T-cell (primary cell): ENCODE measurements at regions of chrX and their contacts with region 1.

Region 1: GRCh38 chrX:54470054-54470760 is 25.8 kb downstream of the FGD1 start:
- DNase-seq: no peak
- ATAC-seq: no peak
- H3K4me3 ChIP-seq: no peak overlapping the region
- H3K4me3 Mint-ChIP-seq: no peak overlapping the region
- H3K27ac ChIP-seq: no peak overlapping the region
- H3K27ac Mint-ChIP-seq: no peak overlapping the region
- H3K4me1 ChIP-seq: no peaks in the 10 kb centered on the region
- H3K4me1 Mint-ChIP-seq: no peaks in the 10 kb centered on the region
- H3K27me3 ChIP-seq: no peaks in the 10 kb centered on the region
- H3K27me3 Mint-ChIP-seq: peaks cover 0 to 7% of the 10 kb centered on the region in 2 donors

Region 2: DNA sequence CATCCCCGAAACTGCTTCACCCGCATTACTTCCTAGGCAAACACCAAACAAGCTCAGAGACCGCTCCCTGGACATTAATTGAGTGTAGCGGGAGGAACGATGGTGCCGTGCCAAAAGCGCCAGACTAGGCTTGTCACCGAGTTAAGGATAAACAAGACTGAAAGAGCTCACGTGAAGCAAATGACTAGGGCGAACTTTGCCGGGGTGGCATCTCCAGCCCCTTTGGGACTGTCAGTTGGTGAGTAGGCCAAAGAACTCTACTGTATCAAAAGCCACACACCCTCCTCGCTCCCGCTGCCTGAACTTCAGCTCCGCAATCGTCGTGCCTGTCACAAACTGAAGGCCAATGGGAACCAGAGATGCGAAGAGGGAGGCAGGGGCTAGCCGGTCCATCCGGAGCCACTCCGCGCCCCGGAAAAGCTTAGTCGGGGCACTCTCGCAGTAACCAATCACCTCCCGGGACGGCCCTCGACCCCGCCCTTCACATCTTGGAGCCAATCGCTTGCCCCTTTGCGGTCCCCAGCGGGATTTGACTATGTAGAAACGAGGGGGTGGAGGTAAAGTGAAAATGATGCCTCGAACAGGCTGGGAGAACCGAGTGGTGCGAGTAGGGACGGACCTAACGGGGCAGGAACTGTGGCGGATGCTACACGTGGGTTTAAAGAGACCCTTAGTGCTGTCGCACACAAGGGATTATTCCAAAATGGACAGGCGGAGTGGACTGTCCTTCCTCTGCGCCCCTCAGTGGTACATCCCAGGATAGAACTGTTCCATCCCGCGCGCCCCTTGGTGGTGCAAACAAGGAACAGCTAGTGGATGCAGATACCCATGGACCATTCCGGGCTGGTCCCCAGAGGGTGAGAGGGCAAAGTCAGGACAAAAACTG is 1474.8 kb before region 1 on chrX:
- CTCF ChIA-PET with region 1: no interaction called
- POLR2A ChIA-PET with region 1: interaction called in 1 of 2 experiments, 10 read pairs
- DNase-seq: peak; percentile 75 to 94 (median 90)
- ATAC-seq: peak; percentile 96 to 97 (median 96)
- H3K4me3 ChIP-seq: peak overlapping the region; percentile 79 to 83
- H3K4me3 Mint-ChIP-seq: peak overlapping the region; percentile 89 to 92 (median 89)
- H3K27ac ChIP-seq: peak overlapping the region; percentile 95
- H3K27ac Mint-ChIP-seq: peak overlapping the region; percentile 98 to 99
- H3K4me1 ChIP-seq: peaks cover 4 to 24% of the 10 kb centered on the region in 2 experiments
- H3K4me1 Mint-ChIP-seq: peaks cover 13 to 27% (median 16%) of the 10 kb centered on the region in 3 donors
- H3K27me3 ChIP-seq: peaks cover 0 to 10% of the 10 kb centered on the region in 2 experiments
- H3K27me3 Mint-ChIP-seq: peaks cover 0 to 17% of the 10 kb centered on the region in 2 donors

Region 3: DNA sequence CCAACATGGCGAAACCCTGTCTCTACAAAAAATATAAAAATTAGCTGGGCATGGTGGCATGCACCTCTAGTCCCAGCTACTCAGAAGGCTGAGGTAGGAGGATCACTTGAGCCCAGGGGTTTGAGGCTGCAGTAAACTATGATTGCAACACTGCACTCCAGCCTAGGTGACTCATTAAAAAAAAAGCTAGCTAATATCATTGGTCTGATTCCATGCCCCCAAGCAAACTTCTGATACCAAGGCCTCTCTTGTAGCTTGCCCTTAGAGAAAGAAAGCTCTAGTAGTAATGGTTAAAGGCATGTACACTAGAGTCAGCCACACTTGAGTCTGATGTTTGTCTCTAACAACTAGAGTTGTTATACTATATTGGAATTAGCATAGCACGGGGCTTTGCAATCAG is 393.3 kb before region 1 on chrX:
- CTCF ChIA-PET with region 1: no interaction called
- POLR2A ChIA-PET with region 1: no interaction called
- DNase-seq: no peak
- ATAC-seq: no peak
- H3K4me3 ChIP-seq: no peak overlapping the region
- H3K4me3 Mint-ChIP-seq: no peak overlapping the region
- H3K27ac ChIP-seq: no peak overlapping the region
- H3K27ac Mint-ChIP-seq: no peak overlapping the region
- H3K4me1 ChIP-seq: no peaks in the 10 kb centered on the region
- H3K4me1 Mint-ChIP-seq: no peaks in the 10 kb centered on the region
- H3K27me3 ChIP-seq: no peaks in the 10 kb centered on the region
- H3K27me3 Mint-ChIP-seq: no peaks in the 10 kb centered on the region

Region 4: GRCh38 chrX:54397113-54397512 is 73.1 kb before region 1 on chrX:
- CTCF ChIA-PET with region 1: no interaction called
- POLR2A ChIA-PET with region 1: no interaction called
- DNase-seq: no peak
- ATAC-seq: no peak
- H3K4me3 ChIP-seq: no peak overlapping the region
- H3K4me3 Mint-ChIP-seq: no peak overlapping the region
- H3K27ac ChIP-seq: no peak overlapping the region
- H3K27ac Mint-ChIP-seq: no peak overlapping the region
- H3K4me1 ChIP-seq: no peaks in the 10 kb centered on the region
- H3K4me1 Mint-ChIP-seq: no peaks in the 10 kb centered on the region
- H3K27me3 ChIP-seq: no peaks in the 10 kb centered on the region
- H3K27me3 Mint-ChIP-seq: peaks cover 3 to 10% of the 10 kb centered on the region in 2 donors

Region 5: DNA sequence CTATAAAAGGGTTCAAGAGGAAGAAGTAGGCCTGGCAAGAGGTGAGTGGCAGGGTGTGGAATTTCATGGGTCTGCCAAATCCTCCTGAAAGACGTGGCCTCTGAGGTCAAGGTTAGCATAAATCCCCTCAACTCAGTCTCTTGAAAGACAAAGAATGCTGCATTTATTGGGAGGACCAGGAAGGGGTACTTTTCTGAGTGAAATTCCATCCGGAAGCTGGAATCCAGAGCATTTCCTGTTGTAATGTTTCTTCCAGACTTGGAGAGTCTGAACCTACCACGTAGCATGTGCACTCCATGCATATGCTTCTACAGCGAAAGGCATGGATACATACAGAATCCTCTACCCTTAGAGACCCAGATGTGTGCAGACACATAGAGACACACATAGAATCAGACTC is 39.2 kb after region 1 on chrX:
- CTCF ChIA-PET with region 1: no interaction called
- POLR2A ChIA-PET with region 1: no interaction called
- DNase-seq: no peak
- ATAC-seq: no peak
- H3K4me3 ChIP-seq: no peak overlapping the region
- H3K4me3 Mint-ChIP-seq: no peak overlapping the region
- H3K27ac ChIP-seq: no peak overlapping the region
- H3K27ac Mint-ChIP-seq: no peak overlapping the region
- H3K4me1 ChIP-seq: no peaks in the 10 kb centered on the region
- H3K4me1 Mint-ChIP-seq: no peaks in the 10 kb centered on the region
- H3K27me3 ChIP-seq: no peaks in the 10 kb centered on the region
- H3K27me3 Mint-ChIP-seq: peaks cover 7 to 22% of the 10 kb centered on the region in 2 donors